Right ventricle myocardium inferior (tissue), 1 donor: ENCODE measurements at regions of chr3 and their contacts with region 1.

Region 1: GRCh38 chr3:58414538-58415197 is 19.0 kb downstream of the PDHB start:
- DNase-seq: no peak
- ATAC-seq: peak; percentile 73

Region 2: GRCh38 chr3:58008140-58009025 is 406.3 kb before region 1 on chr3 and contains the start of gene FLNB:
- intact Hi-C with region 1: no loop called
- DNase-seq: peak; percentile 81
- ATAC-seq: peak; percentile 90
- total RNA-seq, gene FLNB: 32.1 TPM

Region 3: DNA sequence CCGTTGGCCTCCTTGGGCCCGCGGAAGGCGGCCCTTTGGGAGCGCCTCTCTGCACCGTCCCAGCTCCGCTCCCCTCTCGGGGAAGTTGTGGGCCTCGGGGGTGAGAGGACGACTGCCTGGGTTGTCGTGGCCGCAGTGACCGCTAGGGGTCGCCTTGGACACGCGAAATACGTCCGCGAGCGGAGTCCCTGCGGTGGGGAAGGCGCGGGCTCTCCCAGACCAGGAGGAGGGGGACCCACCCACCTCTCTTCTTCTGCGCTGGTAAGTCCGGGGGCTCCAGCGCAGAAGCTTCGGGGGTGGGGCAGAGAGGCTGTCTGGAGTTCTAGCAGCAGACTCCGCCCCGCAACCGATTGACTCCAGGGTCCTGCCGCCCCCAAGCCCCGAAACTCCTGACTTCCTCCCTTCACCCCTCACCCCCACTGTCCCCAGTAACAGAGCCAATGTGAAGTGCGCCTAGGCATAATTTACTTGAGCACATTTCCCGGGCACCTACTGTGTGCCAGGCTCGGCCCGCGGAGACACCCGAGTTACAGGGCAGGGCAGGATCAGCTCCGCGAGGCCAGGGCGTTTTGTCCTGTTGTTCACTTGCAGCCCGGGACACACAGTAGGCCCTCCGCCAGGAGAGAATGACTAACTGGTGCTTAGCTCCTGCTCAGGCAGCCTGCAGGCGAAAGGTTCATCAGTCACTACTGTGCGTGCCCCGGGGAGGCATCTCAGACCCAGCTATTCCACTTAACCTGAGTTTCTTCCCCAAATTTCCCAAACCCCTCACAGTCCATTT is 236.7 kb before region 1 on chr3:
- intact Hi-C with region 1: loop called (anchors 5 kb)
- DNase-seq: peak; percentile 92
- ATAC-seq: peak; percentile 88

Region 4: DNA sequence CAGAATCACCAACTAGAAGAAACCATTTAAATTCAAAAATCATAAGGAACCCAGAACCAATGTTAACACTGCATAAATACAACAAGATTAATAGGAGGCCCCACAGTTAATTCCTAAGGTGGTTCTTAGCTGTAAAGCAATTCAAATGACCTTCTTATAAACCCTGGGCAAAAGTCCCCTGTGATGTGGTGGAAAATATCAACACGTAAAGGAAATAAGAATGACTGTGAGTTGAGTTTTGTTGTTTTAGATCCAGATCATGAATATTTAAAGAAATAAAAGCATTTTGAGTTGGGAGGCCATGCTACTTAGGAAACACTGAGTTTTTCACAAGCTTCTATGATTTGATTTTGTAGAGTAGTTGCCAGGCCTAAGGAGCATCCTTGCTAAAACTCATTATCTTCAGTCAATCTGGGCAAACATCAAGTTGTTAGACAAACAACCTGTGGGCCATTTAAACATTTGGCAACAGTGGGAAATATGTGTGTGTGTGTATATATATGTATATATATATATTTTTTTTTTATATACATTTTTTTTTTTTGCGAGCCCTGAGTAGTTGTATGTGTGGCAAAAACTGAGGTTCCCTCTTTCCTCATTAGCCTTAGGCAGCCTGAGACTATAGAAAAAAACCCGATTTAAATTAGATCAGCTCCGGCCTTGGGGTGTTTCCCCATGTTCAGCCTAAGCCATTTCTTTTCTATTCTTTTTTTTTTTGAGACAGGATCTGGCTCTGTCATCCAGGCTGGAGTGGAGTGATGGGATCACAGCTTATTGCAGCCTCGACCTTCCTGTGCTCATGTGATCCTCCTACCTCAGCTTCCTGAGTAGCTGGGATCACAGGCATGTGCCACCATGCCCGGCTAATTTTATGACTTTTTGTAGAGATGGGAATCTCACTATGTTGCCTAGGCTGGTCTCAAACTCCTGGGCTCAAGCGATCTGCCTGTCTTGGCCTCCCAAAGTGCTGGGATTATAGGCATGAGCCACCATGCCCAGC is 90.0 kb before region 1 on chr3:
- intact Hi-C with region 1: loop called (anchors 1 kb)
- DNase-seq: no peak
- ATAC-seq: no peak

Region 5: GRCh38 chr3:59093521-59093920 is 678.9 kb after region 1 on chr3:
- intact Hi-C with region 1: no loop called
- DNase-seq: no peak
- ATAC-seq: no peak